PC-3 (cell line): ENCODE measurements at regions of chr12 and their contacts with region 1.

Region 1: GRCh38 chr12:127355061-127355841 is 911.7 kb upstream of the TMEM132C start:
- DNase-seq: peak; percentile 76
- ATAC-seq: peak; percentile 96
- H3K4me3 ChIP-seq: no peak overlapping the region
- H3K27ac ChIP-seq: no peak overlapping the region
- H3K4me1 ChIP-seq: peaks cover 6% of the 10 kb centered on the region; the same call in 1 of the 2 replicates
- H3K27me3 ChIP-seq: no peaks in the 10 kb centered on the region
- CTCF ChIP-seq: peak; percentile 93

Region 2: DNA sequence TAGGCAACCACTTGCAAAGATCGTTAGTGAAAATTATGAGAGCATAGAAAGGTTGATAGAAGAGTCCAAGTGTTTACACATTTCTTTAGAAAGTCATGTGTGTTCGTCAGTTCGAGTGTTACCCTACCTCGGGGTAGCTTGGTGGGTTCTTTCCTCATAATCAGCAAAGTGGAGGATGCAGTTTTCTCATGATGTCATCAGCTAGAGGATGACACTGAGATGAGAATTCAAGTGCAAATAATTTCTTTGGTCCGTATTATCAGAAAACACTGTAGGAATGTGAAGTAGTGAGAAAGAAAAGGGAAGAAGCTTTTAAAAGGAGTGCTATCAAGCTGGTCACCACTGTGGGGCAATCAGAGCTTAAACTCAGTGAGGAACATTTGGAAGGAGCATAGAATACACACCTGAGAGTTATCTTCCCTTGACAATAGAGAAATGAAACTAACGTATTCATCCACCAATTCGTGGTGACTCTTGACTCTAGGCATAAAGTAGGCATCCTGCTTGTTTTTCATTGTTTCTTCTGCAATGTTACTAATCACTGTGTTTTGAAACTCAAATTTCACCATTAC is 429.1 kb before region 1 on chr12:
- CTCF ChIA-PET with region 1: no interaction called
- POLR2A ChIA-PET with region 1: interaction called, 3 read pairs
- intact Hi-C with region 1: loop called (anchors 10 kb)
- DNase-seq: peak; percentile 57
- ATAC-seq: peak; percentile 87
- H3K4me3 ChIP-seq: peak overlapping the region; percentile 36
- H3K27ac ChIP-seq: no peak overlapping the region
- H3K4me1 ChIP-seq: 0 out of 2 replicates have a peak, but pooled peaks cover 4% of the 10 kb centered on the region
- H3K27me3 ChIP-seq: peaks cover 36% of the 10 kb centered on the region
- CTCF ChIP-seq: peak; percentile 62

Region 3: DNA sequence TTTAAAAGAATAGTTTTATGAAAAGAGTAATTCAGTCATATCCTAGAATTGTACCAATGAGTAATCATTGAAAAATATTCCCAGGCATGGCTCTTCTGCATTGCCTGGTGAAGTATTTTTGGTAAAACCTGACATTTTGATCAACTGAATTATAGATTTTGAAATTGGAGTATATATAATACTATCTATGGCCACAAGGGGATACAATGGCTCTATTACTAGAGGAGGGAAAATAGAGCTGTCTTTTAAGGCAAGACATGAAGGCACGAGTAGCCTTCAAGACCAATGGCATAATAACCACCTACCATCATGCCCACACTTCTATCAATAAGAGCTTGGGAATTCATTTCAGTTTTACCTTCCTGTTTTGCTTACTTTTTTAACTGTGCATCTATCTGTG is 329.7 kb before region 1 on chr12:
- CTCF ChIA-PET with region 1: interaction called, 3 read pairs
- POLR2A ChIA-PET with region 1: no interaction called
- intact Hi-C with region 1: loop called (anchors 2 kb)
- DNase-seq: peak; percentile 60
- ATAC-seq: peak; percentile 83
- H3K4me3 ChIP-seq: no peak overlapping the region
- H3K27ac ChIP-seq: no peak overlapping the region
- H3K4me1 ChIP-seq: no peaks in the 10 kb centered on the region
- H3K27me3 ChIP-seq: no peaks in the 10 kb centered on the region
- CTCF ChIP-seq: peak; percentile 72

Region 4: GRCh38 chr12:127150028-127150427 is 205.2 kb before region 1 on chr12:
- CTCF ChIA-PET with region 1: interaction called, 3 read pairs
- POLR2A ChIA-PET with region 1: no interaction called
- intact Hi-C with region 1: loop called (anchors 1 kb)
- DNase-seq: no peak
- ATAC-seq: no peak
- H3K4me3 ChIP-seq: no peak overlapping the region
- H3K27ac ChIP-seq: no peak overlapping the region
- H3K4me1 ChIP-seq: no peaks in the 10 kb centered on the region
- H3K27me3 ChIP-seq: no peaks in the 10 kb centered on the region
- CTCF ChIP-seq: no peak